HEK293 (cell line): ENCODE measurements at regions of chr19 and their contacts with region 1.

Region 1: DNA sequence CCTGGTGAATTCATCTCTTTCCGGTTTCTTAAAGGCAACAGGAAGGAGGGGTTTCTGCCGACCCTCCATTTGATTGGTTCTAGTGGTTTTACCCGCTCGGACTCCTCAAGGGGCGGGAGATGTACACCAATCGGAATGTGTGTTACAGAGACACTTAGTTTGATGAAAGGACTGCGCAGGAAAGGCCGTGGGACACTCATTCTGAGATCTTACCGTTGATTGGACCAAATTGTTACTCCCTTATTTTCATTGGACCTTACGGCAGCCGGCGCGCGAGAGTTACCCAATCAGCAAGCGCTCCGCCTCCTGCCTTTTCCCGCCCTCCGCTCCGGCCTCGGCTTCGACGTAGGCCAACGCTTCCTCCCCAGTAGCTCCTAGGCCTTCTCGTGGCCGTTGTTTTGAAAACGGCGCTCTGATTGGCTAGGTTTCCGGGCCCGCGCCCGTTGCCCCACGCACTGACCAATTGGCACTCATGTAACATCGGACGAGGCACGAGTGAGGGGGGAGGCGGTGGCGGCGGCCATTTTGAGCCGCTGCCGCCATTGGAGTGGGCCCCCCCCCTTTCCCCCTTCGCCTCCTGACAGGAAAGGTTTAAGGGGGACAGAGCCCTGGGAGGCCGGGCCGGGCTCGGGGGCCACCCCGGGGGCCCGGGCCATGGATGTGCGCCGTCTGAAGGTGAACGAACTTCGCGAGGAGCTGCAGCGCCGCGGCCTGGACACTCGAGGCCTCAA is at the start of gene HNRNPUL1:
- H3K4me3 ChIP-seq: peak within 1 kb of the TSS; percentile 85
- H3K27ac ChIP-seq: peak within 1 kb of the TSS; percentile 100
- H3K4me1 ChIP-seq: peaks cover 14% of the 10 kb centered on the region
- CTCF ChIP-seq: peak; percentile 89

Region 2: GRCh38 chr19:41206926-41207750 is 56.9 kb before region 1 on chr19:
- CTCF ChIA-PET with region 1: interaction called, 184 read pairs
- POLR2A ChIA-PET with region 1: interaction called, 64 read pairs
- H3K4me3 ChIP-seq: no peak overlapping the region
- H3K27ac ChIP-seq: no peak overlapping the region
- H3K4me1 ChIP-seq: no peaks in the 10 kb centered on the region
- CTCF ChIP-seq: no peak

Region 3: GRCh38 chr19:41226053-41226873 is 37.8 kb before region 1 on chr19:
- CTCF ChIA-PET with region 1: interaction called, 10 read pairs
- POLR2A ChIA-PET with region 1: interaction called, 28 read pairs
- H3K4me3 ChIP-seq: peak overlapping the region; percentile 33
- H3K27ac ChIP-seq: peak overlapping the region; percentile 38; the same call in 1 of the 2 replicates
- H3K4me1 ChIP-seq: peaks cover 3% of the 10 kb centered on the region; the same call in 1 of the 2 replicates
- CTCF ChIP-seq: peak; percentile 39; the same call in 1 of the 2 replicates

Region 4: DNA sequence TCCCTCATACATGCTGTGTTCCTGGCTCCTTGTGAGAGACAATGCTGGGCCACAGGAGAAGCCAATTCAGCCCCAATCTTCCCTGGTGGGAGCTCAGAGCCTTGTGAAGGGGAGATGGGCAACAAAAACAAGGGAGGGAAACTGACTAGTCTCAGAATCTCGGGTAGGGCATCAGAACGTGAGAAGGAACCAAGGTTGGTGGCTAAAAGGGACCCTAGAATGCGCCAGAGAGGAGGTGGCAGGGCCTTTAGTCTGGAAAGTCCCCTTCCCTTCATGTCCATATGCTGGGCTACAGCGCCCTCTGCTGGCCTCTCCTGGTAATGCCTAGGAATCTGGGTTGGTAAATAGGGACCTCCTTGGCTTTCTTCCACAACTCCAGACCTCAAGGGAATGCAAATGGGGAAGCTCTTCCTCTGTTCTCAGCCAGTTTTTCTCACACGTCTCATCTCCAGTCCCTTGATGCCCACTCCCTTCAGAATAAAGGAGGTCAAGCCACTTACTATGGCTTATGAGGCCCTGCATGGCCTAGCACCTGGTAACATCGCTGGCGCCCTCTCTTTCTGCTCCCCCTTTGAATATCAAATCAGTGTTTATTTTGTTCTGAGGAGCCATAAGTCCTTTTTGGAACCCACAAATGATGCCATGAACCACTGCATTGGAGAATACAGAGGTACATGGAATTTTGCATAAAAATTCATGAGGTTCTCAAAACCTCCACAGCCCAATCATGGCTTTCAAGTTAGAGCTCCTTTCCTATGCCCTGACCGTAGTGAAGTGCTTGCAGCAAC is 44.6 kb after region 1 on chr19:
- CTCF ChIA-PET with region 1: interaction called, 55 read pairs
- POLR2A ChIA-PET with region 1: interaction called, 14 read pairs
- H3K4me3 ChIP-seq: no peak overlapping the region
- H3K27ac ChIP-seq: peak overlapping the region; percentile 98
- H3K4me1 ChIP-seq: peaks cover 20% of the 10 kb centered on the region
- CTCF ChIP-seq: peak; percentile 96

Region 5: GRCh38 chr19:41363753-41364523 is 99.9 kb after region 1 on chr19 and contains the start of gene B9D2:
- CTCF ChIA-PET with region 1: no interaction called
- POLR2A ChIA-PET with region 1: interaction called, 26 read pairs
- H3K4me3 ChIP-seq: peak within 1 kb of the TSS; percentile 72
- H3K27ac ChIP-seq: peak within 1 kb of the TSS; percentile 74
- H3K4me1 ChIP-seq: 0 out of 2 replicates have a peak, but pooled peaks cover 5% of the 10 kb centered on the region
- CTCF ChIP-seq: no peak

Region 6: DNA sequence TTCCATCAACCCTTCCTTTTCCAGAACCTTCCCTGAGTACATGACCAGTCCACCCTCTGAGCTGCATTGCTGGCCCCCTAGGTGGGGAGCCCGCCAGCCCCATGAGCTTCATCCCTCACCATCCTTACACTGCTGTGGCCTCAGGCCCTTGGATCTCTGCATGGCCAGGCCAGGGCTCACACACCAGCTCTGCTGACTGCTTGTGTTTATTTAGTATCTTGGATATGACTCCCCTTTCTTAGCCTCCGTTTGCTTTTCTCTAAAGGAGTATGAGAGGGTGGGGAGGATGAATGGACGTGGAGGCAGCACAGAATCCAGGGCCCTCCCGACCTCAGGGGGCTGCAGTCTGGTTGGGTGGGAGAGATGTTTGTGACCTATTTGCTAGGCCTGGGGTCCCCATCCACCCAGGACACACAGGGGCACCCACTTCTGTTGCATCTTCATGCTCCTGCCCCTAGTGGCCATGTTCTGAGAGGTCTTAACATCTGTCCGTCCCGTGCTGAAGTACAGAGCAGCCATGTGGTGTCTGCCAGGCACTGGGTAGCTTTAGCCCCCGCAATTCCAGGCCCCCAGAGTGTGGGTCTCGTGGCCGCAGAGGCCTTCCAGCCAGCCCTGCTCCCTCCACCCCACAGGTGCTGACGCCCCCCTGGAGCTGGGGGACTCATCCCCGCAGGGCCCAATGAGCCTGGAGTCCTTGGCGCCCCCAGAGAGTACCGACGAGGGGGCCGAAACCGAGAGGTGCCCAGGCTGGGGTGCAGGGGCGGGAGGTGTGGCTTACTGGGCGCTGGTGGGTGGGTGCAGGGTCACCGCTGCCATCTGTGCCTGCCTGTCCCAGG is 631.9 kb after region 1 on chr19:
- CTCF ChIA-PET with region 1: no interaction called
- POLR2A ChIA-PET with region 1: interaction called, 13 read pairs
- H3K4me3 ChIP-seq: no peak overlapping the region
- H3K27ac ChIP-seq: peak overlapping the region; percentile 8; the same call in 1 of the 2 replicates
- H3K4me1 ChIP-seq: no peaks in the 10 kb centered on the region
- CTCF ChIP-seq: no peak; the same call in 1 of the 2 replicates